Pancreas (tissue), 10 donors: ENCODE measurements at regions of chr2 and their contacts with region 1.

Region 1: DNA sequence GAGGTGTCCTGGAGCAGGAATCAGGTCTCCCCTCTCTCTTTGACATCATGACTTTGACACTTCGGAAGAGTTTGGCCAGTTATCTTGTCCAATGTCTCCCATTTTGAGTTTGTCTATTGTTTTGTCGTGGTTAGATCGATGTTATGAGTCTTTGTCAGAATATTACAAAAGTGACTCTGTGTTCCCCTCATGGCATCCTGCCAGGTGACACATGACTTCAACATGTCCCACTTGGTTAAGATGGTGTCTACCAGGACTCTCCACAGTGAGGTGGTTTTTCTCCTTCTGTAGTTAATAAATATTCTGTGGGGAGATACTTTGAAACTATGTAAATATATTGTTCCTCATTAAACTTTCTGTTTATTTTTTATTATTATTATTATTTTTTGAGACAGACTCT is 76.6 kb upstream of the BZW1 start:
- DNase-seq: no peak
- ATAC-seq: no peak
- H3K4me3 ChIP-seq: no peak overlapping the region
- H3K27ac ChIP-seq: no peak overlapping the region
- H3K4me1 ChIP-seq: no peaks in the 10 kb centered on the region
- H3K27me3 ChIP-seq: no peaks in the 10 kb centered on the region
- CTCF ChIP-seq: no peak

Region 2: DNA sequence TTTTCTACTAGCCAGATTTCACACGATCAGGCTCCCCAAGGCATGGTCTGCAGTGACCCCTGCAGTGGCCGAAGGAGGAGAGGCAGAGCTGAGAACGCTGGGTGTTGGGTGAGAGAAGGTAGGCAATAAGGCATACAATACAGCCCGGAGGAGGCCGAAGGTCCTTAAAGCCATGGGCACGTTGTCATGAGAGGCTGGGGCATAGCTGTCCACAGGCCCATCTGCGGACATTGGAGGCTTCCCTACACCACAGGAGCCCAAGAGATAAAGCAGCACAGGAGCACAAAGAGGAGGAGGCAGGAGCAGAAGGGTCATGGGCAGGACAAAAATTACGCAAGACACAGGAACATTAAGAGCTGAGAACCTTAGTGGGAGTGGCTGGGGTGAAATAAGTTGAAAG is 60.0 kb after region 1 on chr2:
- intact Hi-C with region 1: loop called in 1 of 3 experiments (anchors 10 kb)
- DNase-seq: no peak
- ATAC-seq: no peak
- H3K4me3 ChIP-seq: no peak overlapping the region
- H3K27ac ChIP-seq: no peak overlapping the region
- H3K4me1 ChIP-seq: peaks cover 0 to 15% (median 14%) of the 10 kb centered on the region in 3 donors
- H3K27me3 ChIP-seq: no peaks in the 10 kb centered on the region
- CTCF ChIP-seq: no peak